ENCODE measurements at regions of chr9 and their contacts with region 1.

Region 1: GRCh38 chr9:109817846-109818472 is 38.0 kb downstream of the PALM2AKAP2 start:
- DNase-seq: no peak

Region 2: GRCh38 chr9:109574068-109574882 is 243.7 kb before region 1 on chr9:
- intact Hi-C with region 1: loop called in 1 of 2 experiments (anchors 10 kb)
- DNase-seq: no peak

Measured in posterior vena cava (tissue), 2 donors.